ENCODE measurements at regions of chr14 and their contacts with region 1.

Region 1: GRCh38 chr14:21136024-21136423 is 19.8 kb downstream of the OR5AU1 start:
- DNase-seq: no peak
- ATAC-seq: no peak
- H3K4me3 Mint-ChIP-seq: no peak overlapping the region
- H3K27ac Mint-ChIP-seq: no peak overlapping the region
- H3K4me1 Mint-ChIP-seq: no peaks in the 10 kb centered on the region
- H3K27me3 Mint-ChIP-seq: peaks cover 3% of the 10 kb centered on the region

Region 2: DNA sequence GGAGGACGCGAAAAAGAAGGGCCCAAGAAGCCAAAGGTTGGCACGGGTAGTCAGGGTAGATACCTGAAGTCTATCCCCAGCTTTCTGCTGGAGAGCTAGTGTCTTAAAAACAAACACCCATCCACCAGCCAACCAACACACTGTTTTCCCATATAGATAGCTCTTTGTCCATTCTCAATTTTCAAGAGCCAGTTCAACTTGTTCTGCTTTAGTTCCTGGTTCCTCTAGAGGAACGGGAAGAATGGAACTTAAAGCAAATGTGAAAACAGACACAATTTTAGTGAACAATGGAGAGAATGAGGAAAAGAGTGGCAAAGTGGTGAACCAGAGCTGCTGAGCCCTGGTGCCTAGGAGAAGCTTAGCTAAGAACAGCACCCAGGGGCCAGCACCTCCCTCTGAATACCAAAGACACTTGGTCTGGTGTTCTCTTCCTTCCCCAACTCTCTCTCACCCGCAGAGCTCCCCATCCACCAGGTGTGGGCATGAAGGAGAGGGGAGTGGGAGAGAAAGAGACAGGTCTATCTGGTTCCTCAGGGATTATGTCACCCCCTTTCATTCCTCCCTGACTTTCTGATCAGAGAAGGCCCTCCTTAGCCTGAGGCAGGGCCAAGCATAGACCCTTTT is 114.9 kb before region 1 on chr14:
- CTCF ChIA-PET with region 1: no interaction called
- POLR2A ChIA-PET with region 1: no interaction called
- intact Hi-C with region 1: no loop called
- DNase-seq: no peak
- ATAC-seq: no peak
- H3K4me3 Mint-ChIP-seq: no peak overlapping the region
- H3K27ac Mint-ChIP-seq: no peak overlapping the region
- H3K4me1 Mint-ChIP-seq: peaks cover 16% of the 10 kb centered on the region
- H3K27me3 Mint-ChIP-seq: peaks cover 2% of the 10 kb centered on the region

Region 3: DNA sequence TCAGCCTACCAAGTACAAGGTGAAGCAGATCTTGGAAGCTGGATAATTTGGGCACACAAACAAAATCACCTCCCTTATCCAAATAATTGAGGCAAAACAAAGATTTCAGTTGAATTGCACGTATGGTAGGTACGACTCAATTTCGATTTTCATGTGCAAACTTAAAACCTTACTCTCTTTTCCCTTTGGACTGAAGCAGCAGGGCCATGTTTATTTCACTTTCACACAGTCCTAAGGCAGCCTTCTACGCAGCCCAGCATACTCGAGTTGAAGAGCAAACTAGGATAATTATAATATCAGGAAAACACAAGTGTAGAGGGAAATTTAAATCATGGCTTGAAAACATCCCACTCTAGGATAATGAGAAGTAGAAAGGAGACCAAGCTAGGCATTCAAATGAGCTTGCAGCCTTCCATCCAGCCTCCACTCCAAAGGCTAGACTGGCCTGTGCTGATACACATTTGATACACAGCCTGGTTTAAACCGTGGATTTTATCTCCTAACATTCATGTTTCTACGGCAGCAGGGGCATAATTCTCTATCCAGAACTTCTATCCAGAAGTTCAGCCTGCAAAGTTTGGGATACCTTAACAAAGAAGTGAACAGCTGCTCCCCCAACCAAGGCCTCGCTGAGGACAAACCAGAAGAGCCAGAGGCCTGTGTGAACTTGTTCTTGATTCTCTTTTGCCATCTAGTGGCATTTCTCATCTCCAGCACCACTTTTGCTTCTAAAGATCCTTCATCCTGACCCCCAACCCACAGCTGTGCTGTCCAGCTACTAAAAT is 96.2 kb before region 1 on chr14:
- CTCF ChIA-PET with region 1: no interaction called
- POLR2A ChIA-PET with region 1: no interaction called
- intact Hi-C with region 1: no loop called
- DNase-seq: peak; percentile 29
- ATAC-seq: peak; percentile 75
- H3K4me3 Mint-ChIP-seq: no peak overlapping the region
- H3K27ac Mint-ChIP-seq: no peak overlapping the region
- H3K4me1 Mint-ChIP-seq: peaks cover 6% of the 10 kb centered on the region
- H3K27me3 Mint-ChIP-seq: peaks cover 5% of the 10 kb centered on the region

Region 4: DNA sequence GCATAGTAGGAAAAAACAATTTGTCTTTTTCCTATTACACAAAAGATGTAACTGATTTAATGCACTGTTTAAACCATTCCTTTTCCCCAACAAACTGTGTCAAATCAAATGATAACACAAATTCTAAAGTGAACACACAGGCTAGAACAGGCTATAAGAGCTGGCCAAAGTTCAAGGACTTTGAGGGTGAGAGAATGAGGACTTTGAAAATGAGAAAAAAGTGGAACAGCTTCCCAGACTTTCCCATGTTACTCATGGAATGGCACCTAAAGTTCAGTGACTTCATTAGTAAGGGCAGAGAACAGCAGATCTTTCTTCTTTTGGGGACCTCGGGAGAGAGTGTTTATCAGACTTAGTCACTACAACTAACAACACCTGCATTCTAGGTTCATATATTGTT is 12.6 kb before region 1 on chr14:
- CTCF ChIA-PET with region 1: interaction called, 13 read pairs
- POLR2A ChIA-PET with region 1: no interaction called
- intact Hi-C with region 1: no loop called
- DNase-seq: no peak
- ATAC-seq: no peak
- H3K4me3 Mint-ChIP-seq: no peak overlapping the region
- H3K27ac Mint-ChIP-seq: no peak overlapping the region
- H3K4me1 Mint-ChIP-seq: no peaks in the 10 kb centered on the region
- H3K27me3 Mint-ChIP-seq: peaks cover 9% of the 10 kb centered on the region